CD4-positive, alpha-beta T cell (primary cell): ENCODE measurements at regions of chr10 and their contacts with region 1.

Region 1: DNA sequence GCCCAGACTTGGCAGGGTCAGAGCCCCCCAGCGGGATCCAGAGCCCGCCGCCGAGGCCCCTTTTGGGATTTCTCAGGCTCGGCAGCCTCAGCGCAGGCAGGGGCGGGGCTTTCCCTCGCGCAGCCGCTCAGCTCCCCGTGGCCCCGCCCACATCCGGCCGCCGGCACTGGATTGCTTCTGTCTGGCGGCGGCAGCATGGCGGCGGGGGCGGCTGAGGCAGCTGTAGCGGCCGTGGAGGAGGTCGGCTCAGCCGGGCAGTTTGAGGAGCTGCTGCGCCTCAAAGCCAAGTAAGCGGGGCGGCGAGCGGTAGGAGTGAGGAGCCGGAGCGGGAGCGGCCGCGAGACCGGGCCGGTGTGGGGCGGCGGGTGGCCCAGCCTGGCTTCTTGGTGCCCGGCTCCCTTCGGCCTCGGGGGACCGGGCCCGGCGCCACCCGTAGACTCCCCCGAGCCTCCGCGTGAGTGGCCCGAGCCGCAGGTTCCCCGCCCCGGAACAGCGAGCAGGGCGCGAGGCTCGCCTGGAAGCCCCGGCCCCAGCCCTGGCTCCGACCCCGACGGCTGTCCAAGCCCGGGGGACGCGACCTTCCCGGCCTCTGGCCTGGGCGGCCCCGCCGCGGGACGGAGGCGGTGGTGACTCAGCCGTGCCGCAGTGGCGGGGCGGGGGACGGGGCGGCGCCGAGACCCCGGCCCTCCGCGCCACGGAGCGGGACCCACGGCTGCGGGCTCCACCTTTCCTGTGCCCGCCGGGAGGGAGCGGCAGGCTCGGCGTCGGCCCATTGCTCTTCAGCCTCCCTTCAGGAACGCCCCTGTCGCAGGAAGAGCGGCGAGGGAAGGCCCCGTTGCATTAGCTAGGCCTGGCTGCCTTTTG is at the start of gene GLRX3:
- DNase-seq: peak; percentile 77 to 95 (median 86)
- ATAC-seq: peak; percentile 94
- H3K4me3 ChIP-seq: peak within 1 kb of the TSS; percentile 68
- H3K4me3 Mint-ChIP-seq: peak within 1 kb of the TSS; percentile 96
- H3K27ac ChIP-seq: peak within 1 kb of the TSS; percentile 18 to 70
- H3K27ac Mint-ChIP-seq: peak within 1 kb of the TSS; percentile 80
- H3K4me1 ChIP-seq: peaks cover 38% of the 10 kb centered on the region
- H3K4me1 Mint-ChIP-seq: peaks cover 35% of the 10 kb centered on the region
- H3K27me3 ChIP-seq: no peaks in the 10 kb centered on the region
- H3K27me3 Mint-ChIP-seq: peaks cover 7% of the 10 kb centered on the region
- CTCF ChIP-seq: no peak
- total RNA-seq, gene GLRX3: 25.4 to 29.7 TPM

Region 2: DNA sequence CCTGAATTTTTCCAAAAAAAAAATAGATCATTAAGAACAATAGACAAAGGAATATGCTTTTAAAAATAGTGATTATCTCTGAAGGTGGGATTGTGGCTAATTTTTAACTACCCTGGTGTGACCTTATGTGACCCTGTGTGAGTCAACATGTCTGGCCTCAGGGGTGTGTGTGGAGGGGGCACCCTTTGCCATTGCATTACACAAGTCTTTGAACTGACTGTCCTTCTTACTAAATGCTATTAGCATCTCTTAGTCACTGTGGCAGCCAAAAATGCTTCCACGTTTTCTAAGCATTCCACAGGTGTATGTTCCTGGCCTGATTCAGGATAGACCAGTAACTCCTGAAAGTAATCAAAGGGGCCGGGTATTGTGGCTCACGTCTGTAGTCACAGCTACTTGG is 494.0 kb before region 1 on chr10:
- CTCF ChIA-PET with region 1: no interaction called
- POLR2A ChIA-PET with region 1: no interaction called
- intact Hi-C with region 1: no loop called
- DNase-seq: no peak
- ATAC-seq: no peak
- H3K4me3 ChIP-seq: no peak overlapping the region
- H3K4me3 Mint-ChIP-seq: no peak overlapping the region
- H3K27ac ChIP-seq: no peak overlapping the region
- H3K27ac Mint-ChIP-seq: no peak overlapping the region
- H3K4me1 ChIP-seq: no peaks in the 10 kb centered on the region
- H3K4me1 Mint-ChIP-seq: no peaks in the 10 kb centered on the region
- H3K27me3 ChIP-seq: no peaks in the 10 kb centered on the region
- H3K27me3 Mint-ChIP-seq: no peaks in the 10 kb centered on the region
- CTCF ChIP-seq: no peak

Region 3: DNA sequence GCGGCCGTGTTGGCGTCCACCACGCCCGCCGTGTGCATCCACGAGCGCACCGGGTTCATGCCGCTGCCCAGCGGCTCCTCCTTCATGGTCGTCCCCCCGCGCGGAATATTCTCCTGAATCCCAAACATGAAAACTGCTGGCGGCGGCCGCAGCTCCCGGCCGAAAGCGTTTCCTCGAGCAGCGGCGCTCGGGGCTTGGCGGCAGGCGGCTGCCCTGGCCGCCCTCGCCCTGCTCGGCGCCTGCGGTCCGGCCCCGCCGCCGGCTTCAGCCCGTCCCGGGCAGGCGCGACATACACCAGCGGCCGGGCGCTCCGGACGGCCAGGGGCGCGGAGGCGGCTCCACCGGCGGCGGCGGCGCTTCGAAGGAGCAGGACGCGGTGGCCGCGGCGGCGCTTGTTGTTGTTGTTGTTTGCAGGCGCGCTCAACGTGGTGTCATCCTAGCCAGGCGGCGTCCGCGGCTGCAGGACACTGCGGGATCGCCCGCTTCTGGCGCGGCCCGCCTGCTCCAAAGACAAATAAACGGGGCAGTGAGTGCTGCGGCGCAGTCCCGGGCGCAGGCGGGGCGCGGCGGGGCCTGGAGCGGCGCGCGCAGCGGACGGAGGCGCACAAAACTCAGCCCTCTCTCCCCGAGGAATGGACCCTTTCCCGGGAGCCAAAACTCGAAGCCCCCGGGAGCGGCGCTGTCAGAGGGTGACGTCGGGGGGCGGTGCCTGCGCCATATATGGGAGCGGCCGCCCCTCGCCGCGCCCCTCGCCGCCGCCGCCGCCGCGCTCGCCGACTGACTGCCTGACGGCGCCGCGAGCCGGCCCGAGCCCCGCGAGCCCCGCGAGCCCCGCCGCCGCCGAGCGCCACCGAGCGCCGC is 172.6 kb before region 1 on chr10 and contains the start of gene EBF3:
- CTCF ChIA-PET with region 1: no interaction called
- POLR2A ChIA-PET with region 1: no interaction called
- intact Hi-C with region 1: loop called in 1 of 2 experiments (anchors 10 kb)
- DNase-seq: peak in 9 of 14 experiments; percentile 14 to 77 (median 46)
- ATAC-seq: peak; percentile 73
- H3K4me3 ChIP-seq: peak within 1 kb of the TSS; percentile 30
- H3K4me3 Mint-ChIP-seq: peak within 1 kb of the TSS; percentile 85
- H3K27ac ChIP-seq: no peak within 1 kb of the TSS
- H3K27ac Mint-ChIP-seq: no peak within 1 kb of the TSS
- H3K4me1 ChIP-seq: peaks cover 33% of the 10 kb centered on the region
- H3K4me1 Mint-ChIP-seq: peaks cover 32% of the 10 kb centered on the region
- H3K27me3 ChIP-seq: peaks cover 69 to 87% of the 10 kb centered on the region in 2 experiments
- H3K27me3 Mint-ChIP-seq: peaks cover 72% of the 10 kb centered on the region
- CTCF ChIP-seq: no peak
- total RNA-seq, gene EBF3: not detected

Region 4: GRCh38 chr10:130179640-130180039 is 43.2 kb after region 1 on chr10:
- CTCF ChIA-PET with region 1: no interaction called
- POLR2A ChIA-PET with region 1: no interaction called
- intact Hi-C with region 1: loop called in 1 of 2 experiments (anchors 2 kb)
- DNase-seq: peak in 9 of 14 experiments; percentile 17 to 68 (median 31)
- ATAC-seq: peak; percentile 98
- H3K4me3 ChIP-seq: no peak overlapping the region
- H3K4me3 Mint-ChIP-seq: no peak overlapping the region
- H3K27ac ChIP-seq: no peak overlapping the region
- H3K27ac Mint-ChIP-seq: peak overlapping the region; percentile 13
- H3K4me1 ChIP-seq: no peaks in the 10 kb centered on the region
- H3K4me1 Mint-ChIP-seq: peaks cover 22% of the 10 kb centered on the region
- H3K27me3 ChIP-seq: no peaks in the 10 kb centered on the region
- H3K27me3 Mint-ChIP-seq: no peaks in the 10 kb centered on the region
- CTCF ChIP-seq: peak; percentile 56

Region 5: DNA sequence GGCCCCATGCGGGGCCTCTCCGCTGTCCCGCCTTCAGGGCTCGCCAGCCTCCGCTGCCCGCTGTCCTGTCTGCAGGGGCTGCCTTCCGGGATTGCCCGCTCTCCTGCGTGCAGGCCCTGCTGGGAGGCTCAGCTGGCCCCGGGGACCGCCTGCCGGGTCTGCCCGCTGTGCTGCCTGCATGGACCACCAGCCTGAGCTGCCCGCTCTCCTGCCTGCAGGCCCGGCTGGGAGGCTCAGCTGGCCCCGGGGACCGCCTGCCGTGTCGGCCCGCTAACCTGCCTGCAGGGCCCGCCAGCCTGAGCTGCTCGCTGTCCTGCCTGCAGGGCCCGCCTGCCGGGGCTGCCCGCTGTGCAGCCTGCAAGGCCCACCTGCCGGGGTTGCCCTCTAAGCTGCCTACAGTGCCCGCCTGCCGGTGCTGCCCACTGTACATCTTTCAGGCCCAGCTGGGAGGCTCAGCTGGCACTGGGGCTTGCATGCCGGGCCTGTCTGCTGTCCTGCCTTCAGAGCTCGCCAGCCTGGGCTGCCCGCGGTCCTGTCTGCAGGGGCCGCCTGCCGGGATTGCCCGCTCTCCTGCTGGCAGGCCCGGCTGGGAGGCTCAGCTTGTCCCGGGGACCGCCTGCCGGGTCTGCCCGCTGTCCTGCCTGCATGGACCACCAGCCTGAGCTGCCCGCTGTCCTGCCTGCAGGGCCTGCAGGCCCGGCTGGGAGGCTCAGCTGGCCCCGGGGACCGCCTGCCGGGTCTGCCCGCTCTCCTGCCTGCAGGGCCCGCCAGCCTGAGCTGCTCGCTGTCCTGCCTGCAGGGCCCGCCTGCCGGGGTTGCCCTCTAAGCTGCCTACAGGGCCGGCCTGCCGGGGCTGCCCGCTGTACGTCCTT is 164.8 kb after region 1 on chr10:
- CTCF ChIA-PET with region 1: no interaction called
- POLR2A ChIA-PET with region 1: interaction called, 7 read pairs
- intact Hi-C with region 1: loop called in 1 of 2 experiments (anchors 1 kb)
- DNase-seq: peak; percentile 8 to 73 (median 50)
- ATAC-seq: peak; percentile 69
- H3K4me3 ChIP-seq: peak overlapping the region; percentile 31
- H3K4me3 Mint-ChIP-seq: peak overlapping the region; percentile 93
- H3K27ac ChIP-seq: peak overlapping the region in 1 of 2 donors; percentile 13
- H3K27ac Mint-ChIP-seq: peak overlapping the region; percentile 94
- H3K4me1 ChIP-seq: no peaks in the 10 kb centered on the region
- H3K4me1 Mint-ChIP-seq: peaks cover 18% of the 10 kb centered on the region
- H3K27me3 ChIP-seq: no peaks in the 10 kb centered on the region
- H3K27me3 Mint-ChIP-seq: no peaks in the 10 kb centered on the region
- CTCF ChIP-seq: no peak